ENCODE measurements at regions of chr1 and their contacts with region 1.

Region 1: DNA sequence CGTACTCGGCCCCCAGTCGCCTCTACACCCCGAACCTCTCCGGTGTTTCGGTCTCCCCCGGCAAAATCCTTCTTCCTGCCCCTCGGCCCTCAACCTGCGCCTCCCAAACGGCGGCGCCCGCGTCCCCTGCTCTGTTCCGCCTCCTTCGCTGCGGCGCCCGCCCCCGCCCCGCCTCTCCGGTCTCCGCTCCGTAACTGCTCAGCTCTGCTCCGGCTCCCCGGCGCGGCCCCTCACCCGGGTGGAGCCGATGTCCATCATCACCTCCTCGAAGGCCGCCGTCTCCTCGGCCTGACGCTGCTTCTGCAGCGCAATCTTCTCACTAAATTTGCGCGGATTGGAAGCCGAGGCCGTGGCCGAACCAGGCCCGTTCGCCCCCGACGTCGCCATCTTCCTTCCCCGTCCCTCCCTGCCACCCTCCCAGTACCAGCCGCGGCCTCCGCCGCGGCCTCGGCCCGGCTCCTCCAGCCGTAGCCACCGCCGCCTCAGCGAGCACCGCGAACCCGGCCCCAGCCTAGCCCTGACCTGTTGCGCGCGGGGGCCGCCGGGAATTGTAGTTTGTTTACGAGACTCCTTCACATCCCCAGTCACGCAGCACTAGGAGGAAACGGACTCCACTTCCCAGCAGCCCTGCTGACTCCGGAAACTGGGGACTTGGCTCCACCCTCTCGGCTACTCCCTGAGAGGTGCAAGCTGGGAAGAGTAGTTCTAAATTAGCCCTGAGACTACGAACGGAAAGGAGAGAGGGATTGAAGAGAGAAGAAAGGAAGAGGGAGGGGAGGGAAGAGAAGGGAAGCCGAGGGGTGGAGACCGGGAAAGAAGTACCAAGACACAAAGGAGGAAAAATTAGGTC is at the start of gene CRTC2:
- DNase-seq: peak; percentile 99
- H3K4me3 Mint-ChIP-seq: peak within 1 kb of the TSS; percentile 88
- H3K27ac Mint-ChIP-seq: peak within 1 kb of the TSS; percentile 94
- H3K4me1 Mint-ChIP-seq: peaks cover 52% of the 10 kb centered on the region
- H3K27me3 Mint-ChIP-seq: no peaks in the 10 kb centered on the region
- total RNA-seq, gene CRTC2: 72.4 and 76.8 TPM in 2 replicates

Region 2: GRCh38 chr1:153783233-153784190 is 174.8 kb before region 1 on chr1:
- intact Hi-C with region 1: loop called (anchors 1 kb)
- DNase-seq: peak; percentile 98
- H3K4me3 Mint-ChIP-seq: peak overlapping the region; percentile 96
- H3K27ac Mint-ChIP-seq: peak overlapping the region; percentile 97
- H3K4me1 Mint-ChIP-seq: peaks cover 7% of the 10 kb centered on the region
- H3K27me3 Mint-ChIP-seq: peaks cover 12% of the 10 kb centered on the region

Region 3: GRCh38 chr1:153832293-153832692 is 126.0 kb before region 1 on chr1:
- intact Hi-C with region 1: no loop called
- DNase-seq: no peak
- H3K4me3 Mint-ChIP-seq: no peak overlapping the region
- H3K27ac Mint-ChIP-seq: no peak overlapping the region
- H3K4me1 Mint-ChIP-seq: peaks cover 5% of the 10 kb centered on the region
- H3K27me3 Mint-ChIP-seq: no peaks in the 10 kb centered on the region

Region 4: GRCh38 chr1:153977250-153978240 is 19.2 kb after region 1 on chr1 and contains the start of gene JTB:
- intact Hi-C with region 1: loop called (anchors 1 kb)
- DNase-seq: peak; percentile 95
- H3K4me3 Mint-ChIP-seq: peak within 1 kb of the TSS; percentile 99
- H3K27ac Mint-ChIP-seq: peak within 1 kb of the TSS; percentile 97
- H3K4me1 Mint-ChIP-seq: peaks cover 36% of the 10 kb centered on the region
- H3K27me3 Mint-ChIP-seq: no peaks in the 10 kb centered on the region
- total RNA-seq, gene JTB: 195 and 200 TPM in 2 replicates

Measured in activated CD4-positive, alpha-beta T cell treated with anti-CD3 and anti-CD28 coated beads, Interleukin-2, amount 10 ng/mL, durations not matched to agents 24 days and 14 days (primary cell).